Activated T-helper 2 cell treated with anti-CD3 and anti-CD28 coated beads, Interferon-gamma antibody, Interleukin-2, Interleukin-4, amounts not matched to agents 10 μg/mL and 5 μg/mL and 100 μg/mL, durations not matched to agents 14 hours and 24 hours and 36 hours (primary cell): ENCODE measurements at regions of chr13 and their contacts with region 1.

Region 1: DNA sequence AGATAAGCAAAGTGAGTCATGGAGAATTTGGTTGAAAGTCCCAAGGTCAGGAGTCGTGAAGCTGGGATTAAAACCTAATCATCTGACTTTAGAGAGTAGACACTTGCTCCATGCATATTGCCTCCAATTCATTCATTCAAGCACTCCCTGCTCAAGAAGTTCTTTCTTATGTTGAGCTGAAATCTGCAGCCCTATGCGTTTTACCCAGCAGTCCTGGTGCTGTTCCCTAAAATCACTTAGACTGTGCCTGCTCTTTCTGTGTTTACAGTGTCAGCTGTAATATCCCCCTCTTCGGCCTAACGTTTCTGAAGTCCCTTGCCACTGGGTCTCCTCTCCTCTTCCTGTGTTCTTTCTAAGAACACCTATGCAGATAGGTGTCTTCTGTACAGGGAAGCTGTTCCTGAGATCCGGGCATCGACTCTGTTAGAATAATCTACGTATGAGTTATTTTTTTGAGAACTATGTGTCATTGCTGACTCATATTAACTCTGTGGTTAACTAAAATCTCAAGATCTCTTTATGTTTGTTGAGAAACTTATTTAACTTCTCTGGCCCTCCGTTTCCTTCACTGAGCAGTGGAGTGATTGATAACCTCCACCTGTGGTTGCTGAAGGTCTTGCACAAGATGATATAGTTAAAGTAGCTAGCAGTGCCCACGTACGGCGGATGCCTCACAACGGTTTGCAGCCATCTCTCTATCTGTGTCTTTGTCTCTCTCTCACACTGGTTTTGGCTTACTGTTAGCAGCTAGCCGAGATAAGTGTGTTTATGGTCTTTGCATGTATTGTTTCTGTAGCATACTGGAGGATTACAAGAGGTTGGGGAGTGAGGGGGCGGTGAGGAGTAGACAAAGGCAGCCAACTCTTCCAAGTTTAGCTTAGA is 4.7 kb downstream of the ALOX5AP start:
- DNase-seq: peak; percentile 78
- H3K4me3 Mint-ChIP-seq: peak overlapping the region; percentile 76
- H3K27ac Mint-ChIP-seq: peak overlapping the region; percentile 91
- H3K4me1 Mint-ChIP-seq: peaks cover 79% of the 10 kb centered on the region
- H3K27me3 Mint-ChIP-seq: no peaks in the 10 kb centered on the region

Region 2: DNA sequence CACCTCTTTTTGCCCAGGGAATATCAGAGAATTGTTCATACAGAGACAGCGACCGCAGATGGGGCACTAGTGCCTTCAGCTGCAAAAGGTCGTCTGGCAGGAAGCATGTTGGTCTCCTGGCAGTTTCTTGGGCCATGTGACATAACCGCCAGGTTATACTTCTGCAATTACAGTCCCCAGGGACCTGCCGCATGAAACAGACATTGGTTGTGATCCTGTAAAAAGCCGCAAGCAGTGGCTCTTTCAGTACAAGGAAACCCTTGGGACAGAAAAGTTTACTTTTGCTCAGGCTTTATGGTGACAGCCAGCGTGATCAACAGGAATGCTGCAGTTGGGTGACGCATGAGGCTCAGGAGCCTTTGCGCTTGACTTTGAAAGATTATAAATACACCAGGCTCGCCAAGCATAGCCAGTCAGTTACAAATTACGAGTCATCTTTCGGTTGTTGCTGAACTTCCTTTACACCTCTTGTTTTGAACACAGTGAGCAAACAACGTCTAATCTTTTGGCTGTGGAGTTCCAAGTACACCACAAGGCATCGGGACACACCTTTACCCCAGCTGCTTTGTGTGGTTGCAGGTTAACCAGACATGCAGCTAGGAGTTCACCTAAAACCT is 368.2 kb before region 1 on chr13:
- intact Hi-C with region 1: loop called (anchors 10 kb)
- DNase-seq: peak; percentile 60
- H3K4me3 Mint-ChIP-seq: peak overlapping the region; percentile 56
- H3K27ac Mint-ChIP-seq: peak overlapping the region; percentile 98
- H3K4me1 Mint-ChIP-seq: peaks cover 71% of the 10 kb centered on the region
- H3K27me3 Mint-ChIP-seq: no peaks in the 10 kb centered on the region

Region 3: DNA sequence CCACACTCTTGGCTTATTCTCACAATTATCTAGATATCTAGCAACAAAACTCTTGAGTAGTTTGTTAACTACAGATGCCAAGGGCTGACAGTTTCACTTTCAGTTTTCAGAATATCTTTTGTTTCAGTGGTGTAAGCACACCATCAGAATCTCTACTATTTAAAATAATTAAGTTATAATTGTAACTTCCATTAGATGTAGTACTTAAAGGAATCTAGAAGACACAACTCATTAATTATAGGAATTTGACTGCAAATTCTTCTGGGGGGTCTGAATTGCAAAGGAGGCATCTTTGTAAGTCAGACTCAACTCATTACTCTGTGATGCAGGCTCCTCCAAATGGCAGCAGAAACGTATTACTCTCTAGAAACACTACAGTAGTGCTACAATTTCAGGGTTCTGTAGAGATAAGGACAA is 167.1 kb before region 1 on chr13:
- intact Hi-C with region 1: loop called (anchors 5 kb)
- DNase-seq: no peak
- H3K4me3 Mint-ChIP-seq: peak overlapping the region; percentile 62
- H3K27ac Mint-ChIP-seq: peak overlapping the region; percentile 18
- H3K4me1 Mint-ChIP-seq: peaks cover 54% of the 10 kb centered on the region
- H3K27me3 Mint-ChIP-seq: peaks cover 2% of the 10 kb centered on the region

Region 4: GRCh38 chr13:30673669-30674521 is 66.1 kb before region 1 on chr13:
- intact Hi-C with region 1: loop called (anchors 1 kb)
- DNase-seq: peak; percentile 85
- H3K4me3 Mint-ChIP-seq: peak overlapping the region; percentile 86
- H3K27ac Mint-ChIP-seq: peak overlapping the region; percentile 73
- H3K4me1 Mint-ChIP-seq: peaks cover 18% of the 10 kb centered on the region
- H3K27me3 Mint-ChIP-seq: peaks cover 29% of the 10 kb centered on the region

Region 5: GRCh38 chr13:30705680-30706079 is 34.3 kb before region 1 on chr13:
- intact Hi-C with region 1: no loop called
- DNase-seq: no peak
- H3K4me3 Mint-ChIP-seq: no peak overlapping the region
- H3K27ac Mint-ChIP-seq: no peak overlapping the region
- H3K4me1 Mint-ChIP-seq: no peaks in the 10 kb centered on the region
- H3K27me3 Mint-ChIP-seq: peaks cover 21% of the 10 kb centered on the region

Region 6: DNA sequence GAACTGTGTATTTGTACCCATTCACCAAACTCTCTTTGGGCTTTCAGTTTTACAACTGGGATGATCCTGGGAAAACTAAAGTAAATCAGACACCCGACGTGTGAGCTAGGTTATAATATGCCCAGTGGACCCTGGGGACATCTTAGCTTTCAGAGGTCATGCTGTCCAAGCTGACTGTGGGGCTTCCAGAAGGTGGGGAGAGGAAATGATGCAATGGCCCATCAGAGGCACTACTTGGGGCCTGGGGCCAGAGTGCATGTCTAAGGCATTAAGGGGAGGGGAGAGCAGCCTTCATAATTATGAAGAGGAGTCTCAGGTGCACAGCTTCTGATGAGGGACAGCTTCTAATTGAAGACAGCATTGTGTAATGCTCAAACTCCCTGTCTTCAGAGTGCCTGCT is 26.2 kb after region 1 on chr13:
- intact Hi-C with region 1: loop called (anchors 2 kb)
- DNase-seq: no peak
- H3K4me3 Mint-ChIP-seq: no peak overlapping the region
- H3K27ac Mint-ChIP-seq: no peak overlapping the region
- H3K4me1 Mint-ChIP-seq: peaks cover 19% of the 10 kb centered on the region
- H3K27me3 Mint-ChIP-seq: no peaks in the 10 kb centered on the region

Region 7: GRCh38 chr13:31044377-31045285 is 304.6 kb after region 1 on chr13:
- intact Hi-C with region 1: loop called (anchors 1 kb)
- DNase-seq: peak; percentile 78
- H3K4me3 Mint-ChIP-seq: peak overlapping the region; percentile 7
- H3K27ac Mint-ChIP-seq: peak overlapping the region; percentile 86
- H3K4me1 Mint-ChIP-seq: peaks cover 45% of the 10 kb centered on the region
- H3K27me3 Mint-ChIP-seq: no peaks in the 10 kb centered on the region